Breast epithelium (tissue), 4 donors: ENCODE measurements at regions of chr3 and their contacts with region 1.

Region 1: GRCh38 chr3:59824876-59825275 is 775.1 kb upstream of the CFAP20DC start:
- DNase-seq: no peak
- H3K4me3 ChIP-seq: no peak overlapping the region
- H3K27ac ChIP-seq: no peak overlapping the region
- H3K4me1 ChIP-seq: no peaks in the 10 kb centered on the region
- H3K27me3 ChIP-seq: no peaks in the 10 kb centered on the region
- CTCF ChIP-seq: no peak
- POLR2A ChIP-seq: no peak

Region 2: GRCh38 chr3:58623961-58624360 is 1200.9 kb before region 1 on chr3:
- intact Hi-C with region 1: loop called (anchors 5 kb)
- DNase-seq: no peak
- H3K4me3 ChIP-seq: no peak overlapping the region
- H3K27ac ChIP-seq: no peak overlapping the region
- H3K4me1 ChIP-seq: peaks cover 0 to 10% of the 10 kb centered on the region in 2 donors
- H3K27me3 ChIP-seq: no peaks in the 10 kb centered on the region
- CTCF ChIP-seq: no peak
- POLR2A ChIP-seq: no peak

Region 3: GRCh38 chr3:59809710-59810444 is 15.0 kb before region 1 on chr3:
- intact Hi-C with region 1: no loop called
- DNase-seq: no peak
- H3K4me3 ChIP-seq: no peak overlapping the region
- H3K27ac ChIP-seq: peak overlapping the region; percentile 33 to 52
- H3K4me1 ChIP-seq: no peaks in the 10 kb centered on the region
- H3K27me3 ChIP-seq: no peaks in the 10 kb centered on the region
- CTCF ChIP-seq: peak; percentile 31 to 52 (median 49)
- POLR2A ChIP-seq: no peak